ENCODE measurements at regions of chr12 and their contacts with region 1.

Region 1: DNA sequence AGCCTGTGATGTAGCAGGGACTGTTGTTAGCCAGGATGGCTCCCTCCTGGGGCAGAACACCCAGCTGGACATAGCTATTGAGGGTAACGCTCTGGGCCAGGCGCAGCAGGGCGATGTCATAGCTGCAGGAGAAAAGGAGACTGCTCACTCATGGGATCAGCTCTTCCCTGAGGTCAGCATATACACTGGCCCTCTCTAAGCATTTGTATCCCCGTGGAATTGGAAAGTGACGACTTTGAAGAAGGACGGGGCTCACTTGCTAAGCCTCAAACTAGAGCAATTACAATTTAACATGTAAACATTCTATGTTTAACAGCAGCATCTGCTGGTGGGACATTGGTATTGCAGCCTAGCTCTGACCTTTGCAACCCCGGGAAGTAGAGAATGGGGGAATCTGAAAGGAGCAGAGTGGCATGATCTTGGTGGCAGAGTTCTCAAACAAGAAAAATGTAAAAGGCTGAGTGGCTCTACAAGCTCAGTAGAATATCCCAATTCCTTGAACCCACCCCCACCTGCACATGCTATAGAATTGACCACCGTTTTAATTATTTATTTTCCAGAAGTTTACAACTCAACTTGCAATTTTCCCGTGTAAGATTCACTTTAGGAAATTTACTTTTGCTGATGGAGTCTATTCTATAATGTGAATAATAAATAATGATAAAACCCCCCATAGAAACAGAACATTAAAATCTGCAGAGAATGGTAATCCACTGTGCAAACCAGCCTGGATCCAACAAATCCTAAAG is 5.0 kb downstream of the CELA1 start:
- DNase-seq: peak in 1 of 2 donors; percentile 82
- H3K4me3 ChIP-seq: peak overlapping the region in 1 of 2 donors; percentile 40
- H3K27ac ChIP-seq: no peak overlapping the region
- H3K4me1 ChIP-seq: no peaks in the 10 kb centered on the region
- H3K27me3 ChIP-seq: no peaks in the 10 kb centered on the region
- CTCF ChIP-seq: peak; percentile 91 to 94 (median 93)

Region 2: DNA sequence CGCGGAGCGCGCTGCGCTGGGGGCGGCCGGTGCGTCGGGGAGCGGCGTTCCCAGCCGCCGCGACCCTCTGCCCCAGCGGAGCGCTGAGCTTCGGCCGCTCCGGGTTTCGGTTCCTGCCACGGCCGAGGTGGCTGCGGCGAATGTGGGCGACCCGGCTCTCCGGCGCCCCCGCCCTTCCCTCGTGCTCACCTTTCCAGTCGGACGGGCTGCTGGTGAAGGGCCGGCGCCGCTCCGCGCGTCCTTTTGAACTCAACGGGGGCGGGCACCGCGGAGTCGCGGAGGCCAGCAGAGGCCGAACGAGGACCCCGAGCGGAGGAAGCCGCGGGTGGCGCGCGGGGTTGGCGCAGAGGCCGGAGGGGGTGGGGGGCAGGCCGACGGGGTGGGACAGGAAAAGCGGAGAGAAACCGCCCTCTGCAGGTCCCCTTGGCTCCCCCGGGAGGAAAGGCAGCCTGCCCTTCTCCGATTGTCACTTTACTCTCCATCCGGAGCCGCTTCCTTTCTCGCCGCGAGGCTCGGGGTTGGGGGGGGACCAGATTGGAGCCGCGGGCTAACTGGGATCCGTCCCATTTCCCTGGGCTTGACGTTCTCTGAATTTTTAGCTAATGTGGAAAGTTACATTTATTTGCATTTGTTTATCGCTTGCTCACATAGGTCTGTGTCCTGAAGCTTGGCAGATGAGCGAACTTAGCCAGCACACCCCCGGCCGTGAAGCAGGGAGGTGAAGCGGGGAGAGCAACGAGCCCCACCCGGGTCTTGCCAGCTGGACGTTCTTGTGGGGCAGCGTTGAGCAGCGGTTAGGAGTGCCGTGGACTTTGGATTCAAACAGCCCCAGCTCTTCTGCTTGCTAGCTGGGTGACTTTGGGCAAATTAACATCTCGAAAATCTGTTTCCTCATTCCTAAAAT is 71.1 kb before region 1 on chr12 and contains the start of gene SMAGP:
- intact Hi-C with region 1: loop called (anchors 2 kb)
- DNase-seq: peak in 1 of 2 donors; percentile 67
- H3K4me3 ChIP-seq: peak within 1 kb of the TSS; percentile 97
- H3K27ac ChIP-seq: peak within 1 kb of the TSS; percentile 28 to 38
- H3K4me1 ChIP-seq: peaks cover 3% of the 10 kb centered on the region in 2 donors
- H3K27me3 ChIP-seq: no peaks in the 10 kb centered on the region
- CTCF ChIP-seq: peak in 1 of 3 experiments; percentile 4
- total RNA-seq, gene SMAGP: 27.4 TPM

Measured in ascending aorta (tissue), 2 donors.